ENCODE measurements at regions of chr7 and their contacts with region 1.

Region 1: DNA sequence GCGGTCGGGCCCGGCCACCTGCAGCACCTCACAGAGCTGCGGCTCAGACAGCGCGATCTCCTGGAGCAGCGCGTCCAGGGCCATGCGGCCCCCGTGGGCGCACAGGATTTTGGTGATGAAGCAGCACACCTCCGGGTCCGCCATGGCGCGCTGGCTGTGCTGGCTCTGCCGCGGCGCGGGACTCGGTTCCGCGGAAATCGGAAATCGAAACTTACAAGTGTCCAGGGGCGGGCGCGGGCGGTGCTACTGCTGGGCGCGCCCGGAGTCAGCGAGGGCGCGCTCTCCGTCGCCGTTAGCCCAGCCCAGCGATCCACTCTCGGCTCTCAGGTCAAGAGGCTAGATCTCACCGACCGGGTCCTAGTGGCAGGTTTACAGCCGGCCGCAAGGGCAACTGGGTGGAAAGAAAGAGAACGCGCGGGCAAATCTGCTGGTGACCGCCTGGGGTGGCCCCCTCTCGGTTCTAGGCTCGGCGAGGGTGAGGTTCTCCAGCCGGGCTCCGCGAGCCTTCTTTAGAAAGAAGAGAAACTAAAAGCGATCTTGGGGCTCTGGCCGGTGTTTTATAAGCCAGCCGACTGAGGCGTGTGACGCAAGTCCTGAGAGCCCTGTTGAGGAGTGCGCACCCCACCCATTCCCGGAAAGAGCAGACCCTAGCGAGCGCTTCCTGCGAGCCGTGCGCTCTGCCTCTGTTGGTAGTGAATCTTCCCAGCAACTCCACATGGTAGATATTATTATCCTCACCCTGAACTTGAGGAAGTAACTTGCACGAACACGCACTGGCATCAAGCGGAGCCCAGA is at the start of gene ZC3HAV1:
- DNase-seq: peak; percentile 90
- H3K4me3 Mint-ChIP-seq: peak within 1 kb of the TSS; percentile 100
- H3K27ac Mint-ChIP-seq: peak within 1 kb of the TSS; percentile 98
- H3K4me1 Mint-ChIP-seq: peaks cover 30% of the 10 kb centered on the region
- H3K27me3 Mint-ChIP-seq: no peaks in the 10 kb centered on the region
- total RNA-seq, gene ZC3HAV1: 76.0 and 77.1 TPM in 2 replicates

Region 2: GRCh38 chr7:139124084-139124914 is 14.9 kb after region 1 on chr7:
- intact Hi-C with region 1: loop called (anchors 2 kb)
- DNase-seq: no peak
- H3K4me3 Mint-ChIP-seq: no peak overlapping the region
- H3K27ac Mint-ChIP-seq: no peak overlapping the region
- H3K4me1 Mint-ChIP-seq: peaks cover 21% of the 10 kb centered on the region
- H3K27me3 Mint-ChIP-seq: peaks cover 6% of the 10 kb centered on the region

Region 3: GRCh38 chr7:139153832-139154231 is 44.4 kb after region 1 on chr7:
- intact Hi-C with region 1: no loop called
- DNase-seq: no peak
- H3K4me3 Mint-ChIP-seq: no peak overlapping the region
- H3K27ac Mint-ChIP-seq: no peak overlapping the region
- H3K4me1 Mint-ChIP-seq: peaks cover 5% of the 10 kb centered on the region
- H3K27me3 Mint-ChIP-seq: no peaks in the 10 kb centered on the region

Region 4: GRCh38 chr7:139297795-139298194 is 188.4 kb after region 1 on chr7:
- intact Hi-C with region 1: no loop called
- DNase-seq: no peak
- H3K4me3 Mint-ChIP-seq: no peak overlapping the region
- H3K27ac Mint-ChIP-seq: no peak overlapping the region
- H3K4me1 Mint-ChIP-seq: no peaks in the 10 kb centered on the region
- H3K27me3 Mint-ChIP-seq: no peaks in the 10 kb centered on the region

Region 5: DNA sequence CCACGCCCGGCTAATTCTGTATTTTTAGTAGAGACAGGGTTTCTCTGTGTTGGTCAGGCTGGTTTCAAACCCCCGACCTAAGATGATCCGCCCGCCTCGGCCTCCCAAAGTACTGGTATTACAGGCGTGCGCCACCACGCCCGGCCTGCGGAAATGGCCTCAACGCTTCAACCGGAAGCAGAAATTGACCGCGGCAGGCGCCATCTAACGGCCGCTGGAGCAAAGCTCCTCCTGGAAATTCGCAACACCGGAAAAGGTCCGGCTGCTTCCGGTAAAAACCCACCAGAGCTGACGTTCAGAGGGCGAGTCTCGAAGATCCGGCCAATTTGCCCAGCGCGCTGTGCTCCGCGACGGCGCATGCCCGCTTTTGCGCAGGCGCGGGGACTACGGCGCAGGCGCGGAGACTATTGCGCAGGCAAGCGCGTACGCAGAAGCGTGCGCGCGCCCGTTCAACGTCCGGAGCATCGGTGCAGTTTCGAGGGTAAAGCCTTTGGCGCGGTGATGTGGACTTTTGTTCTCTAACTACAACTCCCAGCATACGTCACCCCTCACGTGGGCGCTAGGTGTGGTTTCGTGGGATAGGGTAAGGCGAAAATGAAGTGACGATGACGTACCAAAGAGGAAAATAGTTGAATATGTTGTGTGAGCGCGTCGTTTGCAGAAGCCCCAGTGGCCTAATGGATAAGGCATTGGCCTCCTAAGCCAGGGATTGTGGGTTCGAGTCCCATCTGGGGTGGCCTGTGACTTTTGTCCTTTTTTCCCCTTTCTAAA is 230.8 kb after region 1 on chr7:
- intact Hi-C with region 1: loop called (anchors 2 kb)
- DNase-seq: peak; percentile 97
- H3K4me3 Mint-ChIP-seq: peak overlapping the region; percentile 97
- H3K27ac Mint-ChIP-seq: peak overlapping the region; percentile 100
- H3K4me1 Mint-ChIP-seq: peaks cover 21% of the 10 kb centered on the region
- H3K27me3 Mint-ChIP-seq: peaks cover 3% of the 10 kb centered on the region

Region 6: GRCh38 chr7:139359366-139360209 is 250.2 kb after region 1 on chr7 and contains the start of gene LUC7L2:
- intact Hi-C with region 1: loop called (anchors 1 kb)
- DNase-seq: peak; percentile 99
- H3K4me3 Mint-ChIP-seq: peak within 1 kb of the TSS; percentile 94
- H3K27ac Mint-ChIP-seq: peak within 1 kb of the TSS; percentile 99
- H3K4me1 Mint-ChIP-seq: peaks cover 32% of the 10 kb centered on the region
- H3K27me3 Mint-ChIP-seq: no peaks in the 10 kb centered on the region
- total RNA-seq, gene LUC7L2: 150 and 151 TPM in 2 replicates

Measured in activated T-helper 2 cell treated with anti-CD3 and anti-CD28 coated beads, Interferon-gamma antibody, Interleukin-2, Interleukin-4, amounts not matched to agents 10 μg/mL and 5 μg/mL and 100 μg/mL, durations not matched to agents 14 hours and 24 hours and 36 hours (primary cell).